BJ (cell line): ENCODE measurements at regions of chr3 and their contacts with region 1.

Region 1: GRCh38 chr3:98593046-98593936 is at the start of gene CPOX:
- DNase-seq: peak; percentile 35
- H3K4me3 ChIP-seq: peak within 1 kb of the TSS; percentile 81
- H3K27me3 ChIP-seq: peaks cover 4% of the 10 kb centered on the region
- CTCF ChIP-seq: no peak
- polyA plus RNA-seq, gene CPOX: 11.1 and 13.8 TPM in 2 replicates

Region 2: GRCh38 chr3:98612587-98612986 is 19.3 kb after region 1 on chr3:
- CTCF ChIA-PET with region 1: interaction called, 14 read pairs
- POLR2A ChIA-PET with region 1: no interaction called
- DNase-seq: no peak
- H3K4me3 ChIP-seq: no peak overlapping the region
- H3K27me3 ChIP-seq: no peaks in the 10 kb centered on the region
- CTCF ChIP-seq: no peak